MCF 10A (cell line): ENCODE measurements at regions of chr1 and their contacts with region 1.

Region 1: GRCh38 chr1:197692965-197693364 is 82.3 kb downstream of the DENND1B start:
- DNase-seq: peak; percentile 46
- H3K4me3 Mint-ChIP-seq: no peak overlapping the region
- H3K27ac Mint-ChIP-seq: no peak overlapping the region
- H3K4me1 Mint-ChIP-seq: peaks cover 19% of the 10 kb centered on the region
- H3K27me3 Mint-ChIP-seq: no peaks in the 10 kb centered on the region
- CTCF ChIP-seq: peak; percentile 61

Region 2: GRCh38 chr1:197486946-197487345 is 206.0 kb before region 1 on chr1:
- CTCF ChIA-PET with region 1: no interaction called
- POLR2A ChIA-PET with region 1: no interaction called
- intact Hi-C with region 1: no loop called
- DNase-seq: peak; percentile 30
- H3K4me3 Mint-ChIP-seq: no peak overlapping the region
- H3K27ac Mint-ChIP-seq: no peak overlapping the region
- H3K4me1 Mint-ChIP-seq: peaks cover 9% of the 10 kb centered on the region
- H3K27me3 Mint-ChIP-seq: no peaks in the 10 kb centered on the region
- CTCF ChIP-seq: no peak

Region 3: DNA sequence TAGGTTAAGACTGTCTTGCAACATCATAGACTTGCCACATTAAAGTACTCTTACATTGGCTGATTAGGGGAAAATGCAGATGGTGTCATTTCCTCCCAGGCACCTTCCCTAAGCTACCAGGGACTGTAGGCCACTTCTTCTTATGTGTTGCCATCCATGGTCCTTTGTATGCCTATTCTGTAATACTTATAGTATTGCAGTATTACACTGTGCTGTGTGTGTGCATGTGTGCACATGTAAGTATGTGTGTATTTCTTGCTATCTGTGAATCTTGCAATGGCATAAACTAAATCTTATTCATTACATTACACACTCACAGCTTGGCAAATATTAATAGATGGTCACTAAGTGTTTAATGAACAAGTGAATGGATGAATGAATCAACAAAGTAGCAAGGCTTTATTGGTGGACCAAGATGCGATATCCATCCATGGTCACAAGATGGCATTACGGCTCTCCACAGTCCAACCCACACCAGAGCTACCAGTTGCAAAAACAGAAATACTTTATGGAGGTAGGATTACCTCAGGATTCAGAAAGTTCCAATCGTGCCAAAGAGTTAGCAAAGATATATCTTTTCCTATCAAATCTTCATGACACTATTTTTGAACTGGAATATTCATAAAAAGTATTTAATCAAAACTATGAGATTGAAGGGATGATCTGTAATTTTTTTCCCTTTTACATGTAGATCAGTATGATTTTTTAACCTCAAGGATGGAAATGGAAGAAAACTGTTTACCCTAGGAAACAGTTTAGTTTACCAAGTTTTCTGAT is 77.9 kb before region 1 on chr1:
- CTCF ChIA-PET with region 1: interaction called, 6 read pairs
- POLR2A ChIA-PET with region 1: no interaction called
- intact Hi-C with region 1: loop called (anchors 5 kb)
- DNase-seq: peak; percentile 67
- H3K4me3 Mint-ChIP-seq: no peak overlapping the region
- H3K27ac Mint-ChIP-seq: no peak overlapping the region
- H3K4me1 Mint-ChIP-seq: no peaks in the 10 kb centered on the region
- H3K27me3 Mint-ChIP-seq: no peaks in the 10 kb centered on the region
- CTCF ChIP-seq: peak; percentile 82

Region 4: GRCh38 chr1:197775282-197776262 is 82.6 kb after region 1 on chr1 and contains the start of gene DENND1B:
- CTCF ChIA-PET with region 1: no interaction called
- POLR2A ChIA-PET with region 1: interaction called, 5 read pairs
- intact Hi-C with region 1: loop called (anchors 2 kb)
- DNase-seq: peak; percentile 84
- H3K4me3 Mint-ChIP-seq: peak within 1 kb of the TSS; percentile 67
- H3K27ac Mint-ChIP-seq: peak within 1 kb of the TSS; percentile 72
- H3K4me1 Mint-ChIP-seq: peaks cover 45% of the 10 kb centered on the region
- H3K27me3 Mint-ChIP-seq: no peaks in the 10 kb centered on the region
- CTCF ChIP-seq: no peak
- total RNA-seq, gene DENND1B: 19.2 and 20.9 TPM in 2 replicates

Region 5: DNA sequence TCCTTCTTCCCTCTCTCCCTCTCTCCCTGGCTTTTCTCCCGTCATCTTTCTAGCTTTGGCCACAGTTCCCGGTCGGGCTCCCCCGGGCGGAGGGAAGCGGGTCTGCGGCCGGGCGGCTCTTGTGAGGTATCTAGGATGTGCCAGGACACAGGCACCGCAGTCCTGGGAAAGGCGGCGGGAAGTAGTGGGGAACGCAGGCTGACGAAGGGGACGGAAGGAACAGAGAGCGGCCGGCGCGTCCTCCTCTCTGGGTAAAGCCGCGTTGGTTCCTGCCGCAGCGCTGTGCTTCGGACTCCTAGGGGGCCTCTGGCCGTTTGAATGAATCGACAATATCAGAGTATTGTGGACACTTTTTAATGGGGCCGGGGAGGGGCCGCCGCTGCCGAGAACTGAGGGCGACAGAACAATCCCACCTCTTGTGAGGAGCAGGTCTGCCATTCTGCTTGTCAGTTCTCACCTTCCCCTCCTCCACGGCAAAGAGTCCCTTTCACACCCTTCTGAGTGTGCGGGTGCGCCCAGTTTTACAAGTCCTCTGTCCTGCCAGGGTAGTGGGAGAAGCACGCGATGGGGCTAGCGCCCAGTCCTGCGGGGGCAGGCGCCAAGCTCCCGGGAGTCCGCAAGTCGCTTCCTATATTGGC is 223.0 kb after region 1 on chr1:
- CTCF ChIA-PET with region 1: interaction called, 6 read pairs
- POLR2A ChIA-PET with region 1: no interaction called
- intact Hi-C with region 1: loop called (anchors 2 kb)
- DNase-seq: peak; percentile 66
- H3K4me3 Mint-ChIP-seq: peak overlapping the region; percentile 59
- H3K27ac Mint-ChIP-seq: no peak overlapping the region
- H3K4me1 Mint-ChIP-seq: peaks cover 19% of the 10 kb centered on the region
- H3K27me3 Mint-ChIP-seq: no peaks in the 10 kb centered on the region
- CTCF ChIP-seq: peak; percentile 61

Region 6: DNA sequence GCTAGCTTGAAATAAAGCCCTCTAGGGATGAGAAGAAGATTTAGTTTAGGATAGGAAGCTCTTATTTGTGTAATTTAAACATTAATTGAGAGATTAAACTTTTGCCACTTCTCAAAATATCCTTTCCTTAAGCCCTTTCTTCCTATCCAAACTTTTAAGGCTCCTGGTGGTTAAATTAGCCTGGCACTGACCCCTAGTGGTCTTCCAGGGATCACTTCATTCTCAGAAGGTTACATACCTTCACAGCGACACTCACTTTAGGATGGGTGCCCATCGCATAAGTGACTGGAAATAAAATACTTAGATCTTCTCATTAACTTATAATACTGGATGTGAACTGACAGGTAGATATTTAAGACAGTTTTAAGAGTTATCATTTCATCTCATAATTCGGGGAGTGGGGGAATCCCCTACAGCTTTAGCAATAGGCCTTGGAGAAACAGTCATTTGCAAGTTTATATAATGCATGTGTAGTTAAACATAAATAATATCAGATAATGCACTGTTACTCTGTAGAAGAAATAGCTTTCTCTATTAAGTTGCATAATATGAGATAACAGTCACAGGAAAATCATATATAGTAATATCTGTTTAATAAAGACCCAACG is 231.7 kb after region 1 on chr1:
- CTCF ChIA-PET with region 1: interaction called, 27 read pairs
- POLR2A ChIA-PET with region 1: no interaction called
- intact Hi-C with region 1: loop called (anchors 1 kb)
- DNase-seq: peak; percentile 84
- H3K4me3 Mint-ChIP-seq: no peak overlapping the region
- H3K27ac Mint-ChIP-seq: no peak overlapping the region
- H3K4me1 Mint-ChIP-seq: peaks cover 5% of the 10 kb centered on the region
- H3K27me3 Mint-ChIP-seq: no peaks in the 10 kb centered on the region
- CTCF ChIP-seq: peak; percentile 84